HepG2 (cell line): ENCODE measurements at regions of chr15 and their contacts with region 1.

Region 1: DNA sequence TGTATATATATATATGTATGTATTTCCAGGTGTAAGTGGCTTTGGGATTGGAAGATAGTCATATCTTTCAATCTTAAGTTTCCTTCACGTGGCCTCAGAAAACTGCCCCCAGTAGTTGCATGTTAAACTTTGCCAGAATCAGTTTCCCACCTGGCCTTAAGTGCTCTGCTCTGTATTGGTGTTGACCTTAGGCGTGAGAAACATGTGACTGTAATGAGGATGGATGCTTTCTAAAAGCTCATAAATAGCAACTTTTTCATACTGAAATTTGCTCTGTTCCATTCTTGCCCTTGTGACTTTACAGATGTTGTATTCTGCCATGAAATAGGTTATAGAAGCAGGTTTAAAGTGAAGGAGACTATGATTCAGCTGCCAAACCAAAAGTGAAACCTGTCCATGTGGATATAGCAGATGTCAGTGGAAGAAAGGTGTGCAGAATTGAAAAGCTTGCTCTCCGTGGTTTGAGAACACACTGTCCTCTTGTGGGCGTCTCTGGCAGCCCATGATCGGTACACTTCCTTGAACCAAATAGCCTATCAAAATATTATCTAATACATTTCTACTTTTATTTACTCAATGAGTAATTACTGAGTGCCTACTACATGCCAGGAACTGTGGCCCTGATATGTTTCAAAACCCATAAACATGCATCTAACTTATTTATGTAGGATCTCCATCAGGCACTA is 15.8 kb downstream of the SCG5 start:
- DNase-seq: no peak
- ATAC-seq: no peak
- H3K4me3 ChIP-seq: no peak overlapping the region
- H3K27ac ChIP-seq: no peak overlapping the region
- H3K4me1 ChIP-seq: no peaks in the 10 kb centered on the region
- H3K27me3 ChIP-seq: no peaks in the 10 kb centered on the region
- CTCF ChIP-seq: no peak
- EP300 ChIP-seq: no peak
- POLR2A ChIP-seq: no peak
- RAD21 ChIP-seq: no peak

Region 2: GRCh38 chr15:32774022-32774421 is 116.7 kb after region 1 on chr15:
- CTCF ChIA-PET with region 1: no interaction called
- POLR2A ChIA-PET with region 1: no interaction called
- in situ Hi-C with region 1: no loop called
- intact Hi-C with region 1: loop called (anchors 5 kb)
- DNase-seq: peak; percentile 38
- ATAC-seq: no peak
- H3K4me3 ChIP-seq: no peak overlapping the region
- H3K27ac ChIP-seq: no peak overlapping the region
- H3K4me1 ChIP-seq: no peaks in the 10 kb centered on the region
- H3K27me3 ChIP-seq: no peaks in the 10 kb centered on the region
- CTCF ChIP-seq: no peak
- EP300 ChIP-seq: no peak
- POLR2A ChIP-seq: no peak
- RAD21 ChIP-seq: no peak

Region 3: GRCh38 chr15:32844118-32844711 is 186.9 kb after region 1 on chr15:
- CTCF ChIA-PET with region 1: interaction called, 5 read pairs
- POLR2A ChIA-PET with region 1: no interaction called
- in situ Hi-C with region 1: no loop called
- intact Hi-C with region 1: loop called (anchors 1 kb)
- DNase-seq: peak; percentile 30
- ATAC-seq: no peak
- H3K4me3 ChIP-seq: no peak overlapping the region
- H3K27ac ChIP-seq: no peak overlapping the region
- H3K4me1 ChIP-seq: peaks cover 3% of the 10 kb centered on the region
- H3K27me3 ChIP-seq: no peaks in the 10 kb centered on the region; a peak in 1 of 5 replicates
- CTCF ChIP-seq: peak; percentile 61
- EP300 ChIP-seq: no peak
- POLR2A ChIP-seq: no peak
- RAD21 ChIP-seq: no peak

Region 4: DNA sequence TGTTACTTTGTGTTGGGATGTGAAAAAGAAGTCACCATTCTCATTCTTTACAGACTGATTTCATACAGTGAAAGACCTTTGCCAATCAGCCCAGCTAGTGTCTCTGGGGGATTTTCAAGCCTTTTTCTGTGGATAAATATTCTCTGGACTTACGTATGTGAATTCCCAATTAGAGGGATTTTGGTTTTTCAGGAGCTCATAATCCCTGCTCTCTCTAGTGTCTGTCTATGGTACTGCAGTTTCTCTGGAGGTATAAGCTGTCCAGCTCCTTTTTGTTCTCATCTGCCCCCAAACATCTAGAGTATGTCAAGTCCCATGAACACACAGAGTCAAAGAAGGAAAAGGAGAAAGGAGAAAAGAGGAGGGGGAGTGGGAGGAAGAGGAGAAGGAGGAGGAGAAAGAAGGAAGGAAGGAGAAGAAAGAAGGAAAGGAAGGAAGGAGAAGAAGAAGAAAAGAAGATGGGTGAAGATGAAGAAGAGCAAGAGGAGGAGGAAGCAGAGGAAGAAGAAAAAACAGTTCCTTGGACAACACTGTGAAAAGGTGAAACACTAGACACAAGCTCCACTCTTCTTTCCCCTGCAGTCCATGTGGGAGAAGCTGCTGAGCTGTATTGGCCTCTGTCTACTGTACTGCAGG is 279.1 kb after region 1 on chr15:
- CTCF ChIA-PET with region 1: interaction called, 22 read pairs
- POLR2A ChIA-PET with region 1: no interaction called
- in situ Hi-C with region 1: loop called (anchors 5 kb)
- intact Hi-C with region 1: loop called (anchors 1 kb)
- DNase-seq: peak; percentile 16
- ATAC-seq: peak; percentile 68
- H3K4me3 ChIP-seq: no peak overlapping the region
- H3K27ac ChIP-seq: no peak overlapping the region
- H3K4me1 ChIP-seq: no peaks in the 10 kb centered on the region
- H3K27me3 ChIP-seq: no peaks in the 10 kb centered on the region
- CTCF ChIP-seq: peak; percentile 53
- EP300 ChIP-seq: no peak
- POLR2A ChIP-seq: no peak
- RAD21 ChIP-seq: no peak

Region 5: GRCh38 chr15:32956006-32956405 is 298.7 kb after region 1 on chr15:
- CTCF ChIA-PET with region 1: interaction called, 7 read pairs
- POLR2A ChIA-PET with region 1: no interaction called
- in situ Hi-C with region 1: no loop called
- intact Hi-C with region 1: loop called (anchors 1 kb)
- DNase-seq: peak; percentile 25
- ATAC-seq: peak; percentile 47; the same call in 1 of the 3 replicates
- H3K4me3 ChIP-seq: no peak overlapping the region
- H3K27ac ChIP-seq: no peak overlapping the region
- H3K4me1 ChIP-seq: no peaks in the 10 kb centered on the region
- H3K27me3 ChIP-seq: no peaks in the 10 kb centered on the region
- CTCF ChIP-seq: peak; percentile 54
- EP300 ChIP-seq: no peak
- POLR2A ChIP-seq: no peak
- RAD21 ChIP-seq: no peak

Region 6: GRCh38 chr15:32994810-32995424 is 337.6 kb after region 1 on chr15:
- CTCF ChIA-PET with region 1: interaction called, 17 read pairs
- POLR2A ChIA-PET with region 1: no interaction called
- in situ Hi-C with region 1: loop called (anchors 5 kb)
- intact Hi-C with region 1: no loop called
- DNase-seq: peak; percentile 7
- ATAC-seq: no peak
- H3K4me3 ChIP-seq: no peak overlapping the region
- H3K27ac ChIP-seq: no peak overlapping the region
- H3K4me1 ChIP-seq: no peaks in the 10 kb centered on the region
- H3K27me3 ChIP-seq: no peaks in the 10 kb centered on the region; a peak in 1 of 5 replicates
- CTCF ChIP-seq: peak; percentile 44
- EP300 ChIP-seq: no peak
- POLR2A ChIP-seq: no peak
- RAD21 ChIP-seq: no peak

Region 7: GRCh38 chr15:33132722-33133345 is 475.5 kb after region 1 on chr15:
- CTCF ChIA-PET with region 1: interaction called, 8 read pairs
- POLR2A ChIA-PET with region 1: no interaction called
- in situ Hi-C with region 1: loop called (anchors 10 kb)
- intact Hi-C with region 1: loop called (anchors 5 kb)
- DNase-seq: peak; percentile 31
- ATAC-seq: peak; percentile 75
- H3K4me3 ChIP-seq: no peak overlapping the region
- H3K27ac ChIP-seq: no peak overlapping the region
- H3K4me1 ChIP-seq: no peaks in the 10 kb centered on the region
- H3K27me3 ChIP-seq: no peaks in the 10 kb centered on the region
- CTCF ChIP-seq: peak; percentile 68
- EP300 ChIP-seq: no peak
- POLR2A ChIP-seq: no peak
- RAD21 ChIP-seq: peak; percentile 52; the same call in 1 of the 2 replicates